ENCODE measurements at regions of chr14 and their contacts with region 1.

Region 1: GRCh38 chr14:106200541-106201315 is 674.3 kb downstream of the TMEM121 start:
- DNase-seq: peak; percentile 59
- H3K4me3 Mint-ChIP-seq: peak overlapping the region; percentile 48
- H3K27ac Mint-ChIP-seq: no peak overlapping the region
- H3K4me1 Mint-ChIP-seq: peaks cover 22% of the 10 kb centered on the region
- H3K27me3 Mint-ChIP-seq: peaks cover 69% of the 10 kb centered on the region

Region 2: DNA sequence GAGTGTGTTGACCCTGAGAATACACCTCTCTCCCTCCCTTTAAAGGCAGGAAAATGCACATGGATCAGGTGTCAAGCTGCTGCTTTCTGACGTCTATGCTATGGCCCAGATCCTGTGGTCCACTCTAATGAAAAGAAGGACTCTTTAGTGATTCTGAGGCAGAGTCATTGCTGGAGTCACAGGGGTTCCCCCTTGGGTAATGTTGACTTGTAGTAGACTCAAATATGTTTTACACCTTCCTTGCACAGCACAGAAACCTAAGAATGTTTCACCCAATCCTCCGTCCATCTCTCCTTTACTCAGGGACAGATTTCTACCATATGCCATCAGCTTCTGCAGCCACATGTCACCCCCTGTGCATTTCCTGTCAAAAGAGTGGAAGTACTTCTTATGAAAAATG is 148.9 kb before region 1 on chr14:
- CTCF ChIA-PET with region 1: no interaction called
- DNase-seq: no peak
- H3K4me3 Mint-ChIP-seq: no peak overlapping the region
- H3K27ac Mint-ChIP-seq: no peak overlapping the region
- H3K4me1 Mint-ChIP-seq: peaks cover 10% of the 10 kb centered on the region
- H3K27me3 Mint-ChIP-seq: peaks cover 12% of the 10 kb centered on the region

Region 3: DNA sequence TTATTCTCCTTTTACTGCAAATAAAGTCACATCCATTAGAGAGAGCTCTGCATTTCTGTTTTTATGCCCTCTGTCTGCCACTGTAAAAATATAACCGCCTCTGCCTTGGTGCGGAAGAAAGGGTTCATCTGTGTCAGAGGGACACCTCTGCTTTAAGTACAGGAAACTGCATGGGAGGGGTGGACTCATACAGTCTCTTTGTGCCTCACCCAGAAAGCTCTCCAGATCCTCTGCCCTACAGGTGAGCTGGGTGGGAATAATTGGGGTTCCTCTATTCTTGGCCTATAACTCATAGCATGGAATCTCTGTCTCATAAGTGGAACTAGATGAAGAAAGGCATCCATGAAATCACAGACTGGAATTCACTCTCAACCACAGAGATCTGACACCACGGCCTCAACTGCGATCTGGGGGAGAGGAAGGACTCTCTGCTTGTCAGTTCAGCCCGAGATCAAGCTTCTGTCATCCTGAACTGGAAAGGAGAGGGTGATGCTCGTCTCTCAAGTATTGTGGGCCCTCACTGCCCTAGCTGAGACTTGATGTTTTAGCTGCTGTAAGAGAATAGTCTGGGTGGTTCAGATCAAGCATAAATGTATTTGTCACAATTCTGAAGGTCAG is 27.9 kb after region 1 on chr14:
- CTCF ChIA-PET with region 1: interaction called, 16 read pairs
- DNase-seq: peak; percentile 60
- H3K4me3 Mint-ChIP-seq: peak overlapping the region; percentile 55
- H3K27ac Mint-ChIP-seq: peak overlapping the region; percentile 90
- H3K4me1 Mint-ChIP-seq: peaks cover 44% of the 10 kb centered on the region
- H3K27me3 Mint-ChIP-seq: peaks cover 3% of the 10 kb centered on the region